B cell (primary cell): ENCODE measurements at regions of chr4 and their contacts with region 1.

Region 1: DNA sequence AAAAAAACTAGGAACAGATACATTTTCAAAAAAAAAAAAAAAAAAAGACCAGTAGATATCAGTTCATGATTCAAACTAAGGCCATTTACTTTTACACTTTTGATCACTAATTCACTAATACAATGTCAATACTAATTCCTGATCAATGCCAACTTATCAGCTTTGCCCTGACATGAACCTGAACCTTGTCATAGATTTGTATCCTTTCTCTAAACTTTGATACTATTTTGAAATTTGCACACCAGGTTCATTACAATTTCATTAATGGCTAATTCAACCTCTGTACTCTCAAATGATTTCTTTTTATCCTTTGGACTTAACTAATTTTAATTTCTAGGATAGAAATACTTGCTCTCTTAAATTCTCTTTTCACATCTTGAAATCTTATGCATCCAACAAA is 37.7 kb downstream of the UGT2B7 start:
- DNase-seq: no peak
- ATAC-seq: no peak
- H3K4me3 ChIP-seq: no peak overlapping the region
- H3K4me3 Mint-ChIP-seq: no peak overlapping the region
- H3K27ac ChIP-seq: no peak overlapping the region
- H3K27ac Mint-ChIP-seq: no peak overlapping the region
- H3K4me1 ChIP-seq: no peaks in the 10 kb centered on the region
- H3K4me1 Mint-ChIP-seq: no peaks in the 10 kb centered on the region
- H3K27me3 ChIP-seq: no peaks in the 10 kb centered on the region
- H3K27me3 Mint-ChIP-seq: no peaks in the 10 kb centered on the region
- CTCF ChIP-seq: no peak

Region 2: GRCh38 chr4:69116645-69117321 is 17.2 kb before region 1 on chr4:
- CTCF ChIA-PET with region 1: no interaction called
- POLR2A ChIA-PET with region 1: no interaction called
- intact Hi-C with region 1: loop called (anchors 1 kb)
- DNase-seq: no peak
- ATAC-seq: no peak
- H3K4me3 ChIP-seq: no peak overlapping the region
- H3K4me3 Mint-ChIP-seq: no peak overlapping the region
- H3K27ac ChIP-seq: no peak overlapping the region
- H3K27ac Mint-ChIP-seq: no peak overlapping the region
- H3K4me1 ChIP-seq: no peaks in the 10 kb centered on the region
- H3K4me1 Mint-ChIP-seq: no peaks in the 10 kb centered on the region
- H3K27me3 ChIP-seq: no peaks in the 10 kb centered on the region
- H3K27me3 Mint-ChIP-seq: no peaks in the 10 kb centered on the region
- CTCF ChIP-seq: no peak